ENCODE measurements at regions of chr14 and their contacts with region 1.

Region 1: DNA sequence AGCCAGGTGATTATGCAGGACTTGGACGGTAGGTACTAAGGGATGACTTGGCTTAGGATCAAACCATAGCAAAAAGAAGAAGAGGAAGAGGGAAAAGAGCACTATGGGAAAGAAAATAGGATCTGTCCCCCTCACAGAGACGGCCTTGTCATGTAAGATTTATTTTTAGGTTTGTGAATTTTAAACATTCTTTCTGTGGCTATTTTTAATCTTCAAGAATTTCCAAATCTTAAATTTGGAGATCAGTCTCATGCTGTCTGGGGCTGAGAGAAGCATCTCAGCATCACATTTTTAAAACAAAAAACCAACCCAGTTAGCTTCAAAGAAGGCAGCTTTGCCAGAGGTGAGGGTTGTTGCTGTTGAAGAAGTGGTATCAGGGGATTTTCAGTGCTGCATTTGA is 52.6 kb upstream of the STRN3 start:
- DNase-seq: no peak
- ATAC-seq: no peak
- H3K4me3 ChIP-seq: no peak overlapping the region
- H3K27ac ChIP-seq: no peak overlapping the region
- H3K4me1 ChIP-seq: peaks cover 0 to 19% (median 9%) of the 10 kb centered on the region in 9 donors
- H3K27me3 ChIP-seq: no peaks in the 10 kb centered on the region
- CTCF ChIP-seq: no peak

Region 2: GRCh38 chr14:30982533-30982932 is 96.2 kb before region 1 on chr14:
- intact Hi-C with region 1: loop called (anchors 1 to 5 kb)
- DNase-seq: no peak
- ATAC-seq: no peak
- H3K4me3 ChIP-seq: no peak overlapping the region
- H3K27ac ChIP-seq: no peak overlapping the region
- H3K4me1 ChIP-seq: peaks cover 0 to 12% (median 4%) of the 10 kb centered on the region in 9 donors
- H3K27me3 ChIP-seq: no peaks in the 10 kb centered on the region
- CTCF ChIP-seq: no peak

Region 3: DNA sequence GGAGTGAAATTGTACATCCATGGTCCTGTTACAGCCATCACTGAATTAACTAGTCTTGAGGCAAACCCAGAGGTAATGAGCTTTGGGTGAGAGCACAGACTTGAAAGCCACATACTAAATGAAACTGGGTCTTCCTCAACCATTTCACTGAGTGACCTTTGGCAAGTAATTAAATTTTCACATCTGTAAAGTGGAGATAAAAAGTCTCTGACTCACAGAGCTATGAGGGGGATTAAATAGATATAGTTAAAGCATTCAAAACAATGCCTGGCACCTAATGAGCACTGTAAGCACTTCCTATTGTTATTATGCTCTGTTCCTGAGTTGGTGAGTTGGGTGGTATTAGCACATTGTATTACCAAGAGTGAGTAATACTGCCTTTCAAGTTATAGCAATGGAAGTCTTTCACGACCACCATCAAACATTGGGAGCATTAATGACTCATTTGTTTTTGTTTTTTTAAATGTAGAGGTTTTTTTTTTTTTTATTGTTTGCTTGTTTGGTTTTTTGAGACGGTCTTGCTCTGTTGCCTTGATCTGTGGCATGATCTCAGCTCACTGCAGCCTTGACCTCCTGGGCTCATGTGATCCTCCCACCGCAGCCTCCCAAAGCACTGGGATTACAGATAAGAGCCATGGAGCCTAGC is 40.1 kb before region 1 on chr14:
- intact Hi-C with region 1: loop called in 1 of 10 experiments (anchors 5 kb)
- DNase-seq: no peak
- ATAC-seq: peak in 6 of 8 donors; percentile 33 to 89 (median 66)
- H3K4me3 ChIP-seq: no peak overlapping the region
- H3K27ac ChIP-seq: no peak overlapping the region
- H3K4me1 ChIP-seq: peaks cover 0 to 4% (median 0%) of the 10 kb centered on the region in 9 donors
- H3K27me3 ChIP-seq: no peaks in the 10 kb centered on the region
- CTCF ChIP-seq: no peak

Region 4: GRCh38 chr14:31154956-31155355 is 76.2 kb after region 1 on chr14:
- intact Hi-C with region 1: no loop called
- DNase-seq: no peak
- ATAC-seq: no peak
- H3K4me3 ChIP-seq: no peak overlapping the region
- H3K27ac ChIP-seq: no peak overlapping the region
- H3K4me1 ChIP-seq: no peaks in the 10 kb centered on the region
- H3K27me3 ChIP-seq: no peaks in the 10 kb centered on the region
- CTCF ChIP-seq: no peak